PC-9 (cell line): ENCODE measurements at regions of chr5 and their contacts with region 1.

Region 1: GRCh38 chr5:33440482-33441240 is at the start of gene TARS1:
- DNase-seq: peak; percentile 100
- H3K4me3 ChIP-seq: peak within 1 kb of the TSS; percentile 88
- H3K27ac ChIP-seq: peak within 1 kb of the TSS; percentile 95
- H3K4me1 ChIP-seq: peaks cover 31% of the 10 kb centered on the region
- H3K27me3 ChIP-seq: no peaks in the 10 kb centered on the region
- CTCF ChIP-seq: no peak
- total RNA-seq, gene TARS1: 477 and 584 TPM in 2 replicates

Region 2: GRCh38 chr5:33649796-33650482 is 209.3 kb after region 1 on chr5:
- CTCF ChIA-PET with region 1: interaction called, 6 read pairs
- POLR2A ChIA-PET with region 1: interaction called, 6 read pairs
- intact Hi-C with region 1: loop called (anchors 5 kb)
- DNase-seq: peak; percentile 72 to 90
- H3K4me3 ChIP-seq: no peak overlapping the region
- H3K27ac ChIP-seq: peak overlapping the region; percentile 30
- H3K4me1 ChIP-seq: peaks cover 30% of the 10 kb centered on the region
- H3K27me3 ChIP-seq: no peaks in the 10 kb centered on the region
- CTCF ChIP-seq: no peak

Region 3: DNA sequence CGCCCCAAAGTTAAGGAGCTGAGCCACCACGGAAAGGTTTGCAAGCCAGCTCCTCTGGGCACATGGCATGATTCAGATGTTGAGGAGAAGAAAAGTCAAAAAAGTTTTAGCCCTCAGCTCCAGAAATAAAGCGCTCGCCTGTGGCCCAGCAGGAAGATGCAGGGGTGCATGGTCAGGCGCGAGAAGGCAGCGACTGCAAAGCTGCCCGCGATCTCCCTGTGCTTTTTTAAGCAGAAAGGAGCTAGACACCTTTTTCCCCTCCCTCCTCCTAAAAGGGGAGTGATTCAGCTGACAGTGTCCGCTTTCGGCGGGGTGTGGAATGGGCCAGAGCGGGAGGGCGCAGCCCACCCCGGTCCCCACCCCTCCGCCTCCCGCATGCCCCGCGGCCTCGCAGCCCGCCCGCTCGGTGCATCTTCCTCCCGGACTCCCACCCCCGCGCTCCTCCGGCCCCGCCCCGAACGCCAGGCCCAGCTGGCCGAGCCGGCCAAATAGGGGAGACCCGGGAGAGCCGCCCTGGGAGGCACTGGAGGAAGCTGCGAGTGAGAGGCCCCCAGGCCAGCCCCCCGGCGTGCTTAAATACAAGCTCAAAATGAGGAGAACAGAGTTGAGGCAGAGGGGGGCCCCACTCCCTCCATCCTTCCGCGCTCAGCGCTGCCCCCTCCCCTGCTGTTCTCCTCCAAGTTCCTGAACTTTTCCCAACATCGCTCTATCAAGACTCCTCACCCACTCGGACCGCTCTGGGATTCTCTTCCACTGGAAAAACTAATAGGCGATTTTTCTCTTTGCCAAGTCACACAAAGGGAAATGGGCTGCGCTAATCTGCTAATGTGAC is 451.3 kb after region 1 on chr5 and contains the start of gene ADAMTS12:
- CTCF ChIA-PET with region 1: no interaction called
- POLR2A ChIA-PET with region 1: interaction called, 4 read pairs
- intact Hi-C with region 1: loop called (anchors 2 kb)
- DNase-seq: peak; percentile 68 to 87
- H3K4me3 ChIP-seq: peak within 1 kb of the TSS; percentile 67
- H3K27ac ChIP-seq: peak within 1 kb of the TSS; percentile 75
- H3K4me1 ChIP-seq: peaks cover 77% of the 10 kb centered on the region
- H3K27me3 ChIP-seq: no peaks in the 10 kb centered on the region
- CTCF ChIP-seq: no peak; the same call in 1 of the 2 replicates
- total RNA-seq, gene ADAMTS12: 71.1 and 103 TPM in 2 replicates

Region 4: GRCh38 chr5:33927685-33928084 is 487.0 kb after region 1 on chr5:
- CTCF ChIA-PET with region 1: no interaction called
- POLR2A ChIA-PET with region 1: no interaction called
- intact Hi-C with region 1: no loop called
- DNase-seq: no peak
- H3K4me3 ChIP-seq: no peak overlapping the region
- H3K27ac ChIP-seq: no peak overlapping the region
- H3K4me1 ChIP-seq: peaks cover 16% of the 10 kb centered on the region
- H3K27me3 ChIP-seq: no peaks in the 10 kb centered on the region
- CTCF ChIP-seq: no peak

Region 5: GRCh38 chr5:34007621-34008600 is 567.2 kb after region 1 on chr5 and contains the start of gene AMACR:
- CTCF ChIA-PET with region 1: interaction called, 5 read pairs
- POLR2A ChIA-PET with region 1: no interaction called
- intact Hi-C with region 1: loop called (anchors 1 kb)
- DNase-seq: peak; percentile 90 to 100
- H3K4me3 ChIP-seq: peak within 1 kb of the TSS; percentile 82
- H3K27ac ChIP-seq: peak within 1 kb of the TSS; percentile 50
- H3K4me1 ChIP-seq: peaks cover 26% of the 10 kb centered on the region
- H3K27me3 ChIP-seq: no peaks in the 10 kb centered on the region
- CTCF ChIP-seq: no peak
- total RNA-seq, gene AMACR: 31.1 and 31.2 TPM in 2 replicates

Region 6: DNA sequence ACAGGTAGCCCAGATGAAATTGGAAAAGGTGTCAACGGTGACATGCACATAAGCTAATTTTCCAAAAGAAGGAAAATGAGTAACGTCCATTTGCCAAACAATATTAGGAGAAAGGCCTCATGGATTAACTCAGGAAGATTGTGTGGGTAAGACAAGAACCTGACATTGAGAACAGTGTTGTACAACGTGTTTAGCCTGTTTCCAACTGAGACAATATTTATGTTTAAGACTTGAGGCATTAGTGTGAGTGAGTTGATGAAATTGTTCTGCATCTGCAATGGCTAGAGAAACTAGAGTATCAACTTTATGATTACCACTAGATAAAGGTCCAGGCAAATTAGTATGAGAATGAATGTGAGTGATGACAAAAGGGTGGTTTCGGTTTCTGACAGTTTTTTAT is 1024.2 kb after region 1 on chr5:
- CTCF ChIA-PET with region 1: no interaction called
- POLR2A ChIA-PET with region 1: no interaction called
- intact Hi-C with region 1: loop called (anchors 1 kb)
- DNase-seq: peak in 1 of 2 experiments; percentile 32
- H3K4me3 ChIP-seq: no peak overlapping the region; the same call in 1 of the 2 replicates
- H3K27ac ChIP-seq: no peak overlapping the region
- H3K4me1 ChIP-seq: peaks cover 6% of the 10 kb centered on the region; the same call in 1 of the 2 replicates
- H3K27me3 ChIP-seq: no peaks in the 10 kb centered on the region
- CTCF ChIP-seq: no peak